Activated CD4-positive, alpha-beta memory T cell treated with anti-CD3 and anti-CD28 coated beads, Interleukin-2, amount 10 ng/mL, durations not matched to agents 7 days and 5 days (primary cell): ENCODE measurements at regions of chr12 and their contacts with region 1.

Region 1: GRCh38 chr12:94305130-94305957 is 154.3 kb downstream of the CEP83 start:
- DNase-seq: peak; percentile 76
- H3K4me3 Mint-ChIP-seq: peak overlapping the region; percentile 12
- H3K27ac Mint-ChIP-seq: peak overlapping the region; percentile 73
- H3K4me1 Mint-ChIP-seq: peaks cover 53% of the 10 kb centered on the region
- H3K27me3 Mint-ChIP-seq: no peaks in the 10 kb centered on the region

Region 2: GRCh38 chr12:94149119-94149780 is 156.1 kb before region 1 on chr12:
- CTCF ChIA-PET with region 1: interaction called, 6 read pairs
- POLR2A ChIA-PET with region 1: interaction called, 12 read pairs
- DNase-seq: peak; percentile 49
- H3K4me3 Mint-ChIP-seq: peak overlapping the region; percentile 90
- H3K27ac Mint-ChIP-seq: no peak overlapping the region
- H3K4me1 Mint-ChIP-seq: peaks cover 24% of the 10 kb centered on the region
- H3K27me3 Mint-ChIP-seq: peaks cover 42% of the 10 kb centered on the region

Region 3: DNA sequence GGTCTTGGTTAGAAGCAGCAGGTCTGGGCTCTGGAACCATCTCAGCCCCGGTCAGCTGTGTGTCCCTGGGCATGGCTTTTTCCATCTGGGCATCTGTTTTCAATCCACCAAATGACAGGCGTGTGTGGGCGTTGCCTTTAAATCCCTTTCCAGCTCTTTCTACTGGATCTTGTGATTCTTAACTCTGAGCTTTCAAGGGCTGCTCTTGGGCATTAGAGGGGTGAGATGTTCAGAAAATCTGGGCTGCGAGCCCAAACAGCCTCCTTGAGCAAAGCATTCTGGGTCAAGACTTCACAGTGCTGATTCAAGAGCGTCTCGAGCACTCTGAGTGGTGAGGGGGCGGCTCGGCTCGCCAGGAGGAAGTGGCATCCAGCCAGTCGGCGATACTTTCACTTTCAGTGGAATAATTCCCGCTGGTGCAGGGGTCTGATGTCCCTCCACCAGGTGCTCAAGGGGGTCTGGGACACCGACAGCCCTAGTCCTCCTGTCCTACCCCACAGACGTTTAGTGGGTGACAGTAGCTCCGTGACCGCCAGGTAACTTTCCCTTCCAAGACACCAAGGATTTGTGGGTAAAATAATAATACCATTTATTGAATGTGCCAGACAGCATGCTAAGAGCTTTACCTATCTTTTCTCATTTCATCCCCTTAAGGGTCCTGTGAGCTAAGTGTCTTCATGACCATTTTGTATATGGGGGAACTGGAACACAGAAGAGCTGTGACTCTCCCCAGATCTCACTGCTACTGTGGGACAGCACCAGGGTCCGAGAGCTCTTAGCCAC is 42.9 kb before region 1 on chr12:
- CTCF ChIA-PET with region 1: no interaction called
- POLR2A ChIA-PET with region 1: interaction called, 14 read pairs
- DNase-seq: peak; percentile 66
- H3K4me3 Mint-ChIP-seq: peak overlapping the region; percentile 74
- H3K27ac Mint-ChIP-seq: peak overlapping the region; percentile 75
- H3K4me1 Mint-ChIP-seq: peaks cover 32% of the 10 kb centered on the region
- H3K27me3 Mint-ChIP-seq: no peaks in the 10 kb centered on the region

Region 4: DNA sequence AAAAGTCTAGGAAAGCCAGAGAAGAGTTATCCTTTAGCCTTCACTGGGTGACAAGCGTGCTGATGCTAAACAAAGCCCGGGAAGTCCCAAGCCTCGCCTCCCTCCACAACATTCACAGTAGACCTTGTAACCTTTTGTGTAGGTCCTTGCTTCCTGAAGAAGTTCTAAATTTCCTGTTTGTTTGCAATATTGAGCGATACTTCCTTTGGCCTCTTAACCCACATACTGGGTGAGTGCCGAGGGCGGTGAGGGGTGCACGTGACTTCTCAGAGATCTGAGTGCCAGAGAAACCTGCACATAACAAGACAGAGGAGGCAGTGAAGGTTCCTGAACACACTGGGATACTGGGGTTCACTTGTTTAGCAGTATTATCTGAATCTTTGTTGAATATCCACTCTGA is 22.7 kb before region 1 on chr12:
- CTCF ChIA-PET with region 1: no interaction called
- POLR2A ChIA-PET with region 1: interaction called, 15 read pairs
- DNase-seq: peak; percentile 74
- H3K4me3 Mint-ChIP-seq: peak overlapping the region; percentile 28
- H3K27ac Mint-ChIP-seq: peak overlapping the region; percentile 73
- H3K4me1 Mint-ChIP-seq: peaks cover 26% of the 10 kb centered on the region
- H3K27me3 Mint-ChIP-seq: no peaks in the 10 kb centered on the region